Adrenal gland (tissue), 19 donors: ENCODE measurements at regions of chr6 and their contacts with region 1.

Region 1: DNA sequence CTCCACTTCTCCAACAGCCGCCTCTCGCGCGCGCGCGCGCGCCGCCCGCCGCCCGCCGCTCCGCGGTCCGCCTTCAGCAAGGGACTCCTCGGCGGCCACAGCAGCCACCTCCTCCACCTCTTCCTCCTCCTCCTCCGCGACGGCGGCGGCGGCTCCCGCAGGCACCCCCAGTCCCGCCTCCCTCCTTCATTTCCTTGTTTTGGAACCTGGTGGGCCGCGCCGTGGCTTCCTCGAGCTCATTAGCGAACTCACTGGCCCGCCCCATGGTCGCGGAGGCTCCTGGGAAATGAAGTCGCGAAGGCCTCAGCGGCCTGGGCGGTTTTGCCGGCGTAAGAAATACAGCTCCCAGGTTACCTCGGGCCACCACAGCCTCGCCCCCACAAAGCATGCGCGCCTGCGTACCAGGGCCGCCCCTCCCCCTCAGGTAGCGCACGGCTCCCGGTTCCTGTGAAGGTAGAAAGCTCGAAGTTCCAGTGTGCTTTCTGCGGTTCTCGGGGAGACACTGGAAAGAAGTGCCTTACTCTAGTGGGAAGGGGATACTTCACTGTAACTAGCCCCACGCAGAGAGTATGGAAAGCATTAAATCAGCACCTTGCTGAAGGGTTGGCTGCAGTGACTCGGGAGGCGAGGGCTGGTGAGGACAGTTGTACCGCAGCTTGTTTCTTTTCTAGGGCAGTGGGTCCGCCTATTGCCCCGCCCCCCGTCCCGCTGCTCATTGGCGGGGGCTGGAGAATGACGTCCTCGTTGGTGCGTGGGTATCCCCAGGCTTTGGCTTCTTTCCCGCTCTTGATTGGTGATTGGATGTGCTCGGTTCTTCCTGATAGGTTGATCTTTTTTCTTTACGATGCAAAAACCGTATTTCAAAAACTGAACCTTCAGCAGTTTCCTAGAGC is at the start of gene CDK19:
- DNase-seq: peak; percentile 97 to 99 (median 99)
- H3K4me3 ChIP-seq: peak within 1 kb of the TSS; percentile 8 to 81 (median 72)
- H3K27ac ChIP-seq: peak within 1 kb of the TSS; percentile 80 to 95 (median 92)
- H3K4me1 ChIP-seq: peaks cover 8 to 30% of the 10 kb centered on the region in 2 donors
- H3K27me3 ChIP-seq: no peaks in the 10 kb centered on the region
- CTCF ChIP-seq: no peak
- POLR2A ChIP-seq: peak; percentile 56 to 95
- total RNA-seq, gene CDK19: 5.4 to 59.1 (median 8.2) TPM

Region 2: GRCh38 chr6:110699780-110700179 is 115.7 kb before region 1 on chr6:
- intact Hi-C with region 1: no loop called
- DNase-seq: no peak
- H3K4me3 ChIP-seq: no peak overlapping the region
- H3K27ac ChIP-seq: no peak overlapping the region
- H3K4me1 ChIP-seq: peaks cover 0 to 5% of the 10 kb centered on the region in 2 donors
- H3K27me3 ChIP-seq: no peaks in the 10 kb centered on the region
- CTCF ChIP-seq: no peak
- POLR2A ChIP-seq: no peak

Region 3: GRCh38 chr6:110882271-110882613 is 66.8 kb after region 1 on chr6:
- intact Hi-C with region 1: loop called in 1 of 2 experiments (anchors 5 kb)
- DNase-seq: no peak
- H3K4me3 ChIP-seq: no peak overlapping the region
- H3K27ac ChIP-seq: no peak overlapping the region
- H3K4me1 ChIP-seq: peaks cover 19 to 75% of the 10 kb centered on the region in 2 donors
- H3K27me3 ChIP-seq: no peaks in the 10 kb centered on the region
- CTCF ChIP-seq: no peak
- POLR2A ChIP-seq: no peak

Region 4: GRCh38 chr6:111030008-111031007 is 214.8 kb after region 1 on chr6:
- intact Hi-C with region 1: no loop called
- DNase-seq: peak in 3 of 7 donors; percentile 4 to 21 (median 18)
- H3K4me3 ChIP-seq: no peak overlapping the region
- H3K27ac ChIP-seq: no peak overlapping the region
- H3K4me1 ChIP-seq: peaks cover 0 to 8% of the 10 kb centered on the region in 2 donors
- H3K27me3 ChIP-seq: no peaks in the 10 kb centered on the region
- CTCF ChIP-seq: no peak
- POLR2A ChIP-seq: no peak

Region 5: DNA sequence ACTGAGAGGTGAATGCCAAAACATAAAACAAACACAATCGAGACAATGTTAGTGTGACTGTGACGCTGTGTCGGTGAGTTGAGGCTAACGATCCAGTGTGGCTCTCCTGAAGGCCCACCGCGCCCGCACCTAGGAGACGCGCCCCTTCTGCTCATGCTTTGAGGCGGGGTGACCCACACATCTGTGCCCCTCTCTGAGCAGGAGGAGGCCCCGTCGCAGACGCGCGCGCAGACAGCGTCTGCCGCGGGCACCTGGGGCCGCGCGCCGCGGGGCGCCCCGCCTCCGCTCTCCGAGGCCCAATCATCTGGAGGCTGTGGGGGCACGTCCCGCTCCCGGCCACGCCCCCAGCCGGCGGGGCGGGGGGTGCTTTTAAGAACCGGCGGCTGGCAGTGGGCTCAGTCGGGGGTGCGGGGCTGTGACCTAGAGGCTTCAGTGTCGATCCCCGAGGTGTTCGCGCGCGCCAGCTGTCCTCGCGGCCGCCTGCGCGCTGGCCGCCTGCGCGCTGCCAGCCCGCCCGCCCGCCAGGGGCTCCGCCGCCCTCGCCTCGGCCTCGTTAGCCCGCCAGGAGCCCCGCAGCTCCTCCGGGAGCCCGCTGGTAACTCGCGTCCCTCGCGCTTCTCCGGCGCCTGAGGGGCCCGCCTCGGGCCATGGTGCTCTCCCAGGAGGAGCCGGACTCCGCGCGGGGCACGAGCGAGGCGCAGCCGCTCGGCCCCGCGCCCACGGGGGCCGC is 271.8 kb after region 1 on chr6 and contains the start of gene SLC16A10:
- intact Hi-C with region 1: no loop called
- DNase-seq: peak; percentile 84 to 91 (median 88)
- H3K4me3 ChIP-seq: peak within 1 kb of the TSS; percentile 38 to 78 (median 64)
- H3K27ac ChIP-seq: peak within 1 kb of the TSS in 3 of 5 donors; percentile 49 to 80 (median 57)
- H3K4me1 ChIP-seq: peaks cover 6 to 22% of the 10 kb centered on the region in 2 donors
- H3K27me3 ChIP-seq: no peaks in the 10 kb centered on the region
- CTCF ChIP-seq: peak in 2 of 6 experiments; percentile 8 to 34
- POLR2A ChIP-seq: peak; percentile 84 to 92
- total RNA-seq, gene SLC16A10: 13.8 to 97.0 (median 28.2) TPM

Region 6: GRCh38 chr6:111462770-111463391 is 647.4 kb after region 1 on chr6:
- intact Hi-C with region 1: no loop called
- DNase-seq: no peak
- H3K4me3 ChIP-seq: no peak overlapping the region
- H3K27ac ChIP-seq: peak overlapping the region in 3 of 5 donors; percentile 35 to 80 (median 77)
- H3K4me1 ChIP-seq: peaks cover 0 to 34% of the 10 kb centered on the region in 2 donors
- H3K27me3 ChIP-seq: no peaks in the 10 kb centered on the region
- CTCF ChIP-seq: no peak
- POLR2A ChIP-seq: no peak